Adrenal gland (tissue), 19 donors: ENCODE measurements at regions of chr2 and their contacts with region 1.

Region 1: DNA sequence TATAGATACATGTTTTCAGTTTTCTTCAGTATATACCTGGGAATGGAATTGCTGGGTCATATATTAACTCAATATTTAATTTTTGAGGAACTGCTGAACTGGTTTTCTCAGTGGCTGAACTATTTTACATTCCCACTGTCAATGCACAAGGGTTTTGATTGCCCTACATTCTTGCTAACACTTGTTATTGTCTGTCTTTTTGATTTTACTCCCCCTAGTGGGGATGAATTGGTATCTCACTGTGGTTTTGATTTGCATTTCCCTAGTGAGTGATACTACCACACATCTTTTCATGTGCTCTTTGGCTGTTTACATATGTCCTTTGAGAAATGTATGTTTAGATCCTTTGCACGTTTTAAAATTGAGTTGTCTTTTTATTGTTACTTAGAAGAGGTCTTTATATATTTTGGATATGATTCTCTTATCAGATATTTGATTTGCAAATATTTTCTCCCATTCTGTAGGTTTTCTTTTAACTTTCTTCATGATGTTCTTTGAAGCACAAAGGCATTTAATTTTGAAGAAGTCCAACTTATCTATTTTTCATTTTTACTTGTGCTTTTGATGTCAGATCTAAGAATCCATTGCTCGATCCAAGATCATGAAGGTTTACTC is 36.2 kb downstream of the ASB1 start:
- DNase-seq: no peak
- H3K4me3 ChIP-seq: no peak overlapping the region
- H3K27ac ChIP-seq: no peak overlapping the region
- H3K4me1 ChIP-seq: no peaks in the 10 kb centered on the region
- H3K27me3 ChIP-seq: no peaks in the 10 kb centered on the region
- CTCF ChIP-seq: peak; percentile 57 to 84 (median 72)
- POLR2A ChIP-seq: no peak

Region 2: GRCh38 chr2:238358769-238359168 is 104.1 kb before region 1 on chr2:
- intact Hi-C with region 1: loop called (anchors 5 to 10 kb)
- DNase-seq: no peak
- H3K4me3 ChIP-seq: no peak overlapping the region
- H3K27ac ChIP-seq: no peak overlapping the region
- H3K4me1 ChIP-seq: no peaks in the 10 kb centered on the region
- H3K27me3 ChIP-seq: no peaks in the 10 kb centered on the region
- CTCF ChIP-seq: no peak
- POLR2A ChIP-seq: no peak

Region 3: GRCh38 chr2:238606311-238606710 is 143.4 kb after region 1 on chr2:
- intact Hi-C with region 1: no loop called
- DNase-seq: no peak
- H3K4me3 ChIP-seq: no peak overlapping the region
- H3K27ac ChIP-seq: no peak overlapping the region
- H3K4me1 ChIP-seq: no peaks in the 10 kb centered on the region
- H3K27me3 ChIP-seq: no peaks in the 10 kb centered on the region
- CTCF ChIP-seq: no peak
- POLR2A ChIP-seq: no peak